Gastrocnemius medialis (tissue), 4 donors: ENCODE measurements at regions of chr10 and their contacts with region 1.

Region 1: DNA sequence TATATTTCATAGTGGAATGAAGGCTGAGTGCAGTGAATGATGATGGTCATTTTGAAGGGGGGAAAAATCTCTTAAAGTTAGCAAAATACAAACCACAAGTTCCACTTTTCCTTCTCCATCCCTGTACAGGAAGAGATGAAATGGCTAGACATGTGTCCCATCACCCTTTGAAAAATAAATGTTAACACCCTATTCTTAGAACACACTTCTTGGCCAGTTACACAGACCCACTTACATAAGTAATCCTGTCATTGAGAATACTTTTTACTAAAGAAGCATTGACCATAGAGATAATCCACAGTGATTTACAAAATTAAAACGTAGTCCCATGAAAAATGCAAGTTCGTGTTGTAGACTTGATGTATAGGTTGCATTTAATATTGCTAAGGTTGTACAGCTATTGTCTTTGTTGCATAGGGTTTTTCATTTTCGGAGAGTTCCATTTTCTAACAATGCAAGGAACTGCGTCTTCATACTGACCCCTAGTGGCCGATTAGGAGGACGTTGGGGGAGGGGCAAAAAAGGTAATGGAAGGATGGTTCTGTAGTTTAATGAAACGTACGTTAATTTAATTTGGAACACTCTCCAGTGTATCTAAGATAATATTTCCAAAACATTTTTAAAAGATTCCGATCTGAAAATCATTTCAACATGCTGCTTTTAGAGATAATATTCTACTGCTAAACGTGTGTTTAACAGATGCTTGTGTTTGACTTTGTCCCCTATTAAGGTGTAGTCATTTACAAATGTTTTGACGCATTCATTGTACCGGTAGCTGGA is 60.9 kb downstream of the ARMC3 start:
- DNase-seq: peak; percentile 32 to 35
- ATAC-seq: peak; percentile 71 to 77
- H3K4me3 ChIP-seq: no peak overlapping the region
- H3K27ac ChIP-seq: no peak overlapping the region
- H3K4me1 ChIP-seq: peaks cover 0 to 4% of the 10 kb centered on the region in 2 donors
- H3K27me3 ChIP-seq: no peaks in the 10 kb centered on the region
- CTCF ChIP-seq: peak; percentile 78 to 90 (median 85)
- POLR2A ChIP-seq: no peak

Region 2: GRCh38 chr10:22597138-22597537 is 391.6 kb before region 1 on chr10:
- in situ Hi-C with region 1: loop called in 1 of 4 experiments (anchors 25 kb)
- intact Hi-C with region 1: no loop called
- DNase-seq: no peak
- ATAC-seq: no peak
- H3K4me3 ChIP-seq: no peak overlapping the region
- H3K27ac ChIP-seq: no peak overlapping the region
- H3K4me1 ChIP-seq: no peaks in the 10 kb centered on the region
- H3K27me3 ChIP-seq: no peaks in the 10 kb centered on the region
- CTCF ChIP-seq: no peak
- POLR2A ChIP-seq: no peak

Region 3: DNA sequence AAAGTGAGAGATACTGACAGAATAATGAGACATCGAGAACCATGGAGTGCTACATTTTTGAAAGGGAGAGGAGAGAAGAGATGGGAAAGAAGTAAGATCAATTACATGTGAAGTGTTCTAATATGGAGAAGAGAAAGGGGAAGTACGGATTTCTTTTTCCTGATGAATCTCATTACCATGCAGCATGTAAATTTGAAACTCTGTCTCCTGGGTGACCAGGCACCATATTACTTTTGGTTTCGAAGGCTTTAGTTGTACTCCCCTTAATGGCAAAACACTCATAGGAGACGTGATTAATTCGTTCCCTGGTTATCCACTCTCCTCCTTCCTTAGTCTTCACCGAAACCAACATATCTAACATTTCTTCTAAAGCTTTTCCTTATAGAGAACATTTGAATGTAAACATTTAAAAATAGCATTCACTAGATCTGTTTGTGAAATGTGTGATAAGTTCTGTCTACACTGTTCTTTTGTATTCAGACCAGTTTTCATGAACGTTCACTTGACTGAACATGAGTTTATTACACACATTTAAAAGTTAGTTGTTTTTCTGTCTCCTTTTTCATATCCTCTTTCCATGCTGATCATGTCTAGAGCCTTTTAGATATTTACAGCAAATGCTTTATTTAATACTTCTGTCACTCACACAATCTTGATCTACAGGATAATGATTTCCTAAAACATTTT is 26.4 kb after region 1 on chr10:
- in situ Hi-C with region 1: no loop called
- intact Hi-C with region 1: no loop called
- DNase-seq: no peak
- ATAC-seq: no peak
- H3K4me3 ChIP-seq: no peak overlapping the region
- H3K27ac ChIP-seq: no peak overlapping the region
- H3K4me1 ChIP-seq: no peaks in the 10 kb centered on the region
- H3K27me3 ChIP-seq: no peaks in the 10 kb centered on the region
- CTCF ChIP-seq: no peak
- POLR2A ChIP-seq: no peak

Region 4: DNA sequence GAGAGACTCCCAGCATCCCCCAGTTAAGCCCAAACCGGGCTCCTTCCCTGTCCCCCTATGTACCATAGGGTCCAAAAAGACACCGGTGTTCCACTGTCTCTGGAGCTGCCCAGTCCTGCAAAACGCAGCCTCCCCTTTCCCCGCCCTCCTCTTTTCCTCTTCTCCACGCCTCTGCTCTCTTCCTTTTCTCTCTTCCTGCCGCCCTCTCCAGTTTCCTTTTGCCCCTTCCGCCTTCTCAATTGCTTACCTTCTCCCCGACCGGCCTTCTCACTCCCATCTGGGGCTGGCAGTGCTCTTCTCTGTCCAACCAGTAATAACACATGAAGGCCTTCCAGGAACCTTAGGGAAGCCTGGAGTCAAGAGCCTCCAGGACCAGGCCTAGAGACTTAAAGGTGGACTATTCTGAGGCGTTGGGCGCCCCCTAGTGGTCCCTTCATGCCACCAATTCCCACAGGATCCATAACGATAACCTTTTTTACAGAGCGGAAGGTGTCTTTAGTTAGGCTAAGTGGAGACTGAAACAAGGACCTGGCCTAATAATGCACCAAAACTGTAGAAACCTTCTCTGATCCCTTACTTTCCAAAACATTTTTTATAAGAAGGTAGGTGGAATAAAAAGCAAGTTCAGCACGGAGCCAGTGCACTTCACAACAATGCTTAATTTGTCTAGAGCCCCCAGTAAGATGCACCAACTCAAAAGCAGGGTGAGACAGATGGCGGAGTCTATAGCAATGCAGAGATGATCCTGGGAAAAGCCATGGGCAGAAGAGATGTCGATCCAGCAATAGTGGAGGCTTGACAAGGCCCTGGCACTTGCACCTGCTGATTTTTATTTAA is 79.4 kb after region 1 on chr10:
- in situ Hi-C with region 1: no loop called
- intact Hi-C with region 1: loop called (anchors 2 kb)
- DNase-seq: peak; percentile 20 to 46
- ATAC-seq: peak; percentile 49 to 62
- H3K4me3 ChIP-seq: no peak overlapping the region
- H3K27ac ChIP-seq: no peak overlapping the region
- H3K4me1 ChIP-seq: peaks cover 22 to 32% of the 10 kb centered on the region in 2 donors
- H3K27me3 ChIP-seq: no peaks in the 10 kb centered on the region
- CTCF ChIP-seq: peak in 4 of 5 experiments; percentile 60 to 82 (median 70)
- POLR2A ChIP-seq: no peak